A673 (cell line): ENCODE measurements at regions of chr13 and their contacts with region 1.

Region 1: DNA sequence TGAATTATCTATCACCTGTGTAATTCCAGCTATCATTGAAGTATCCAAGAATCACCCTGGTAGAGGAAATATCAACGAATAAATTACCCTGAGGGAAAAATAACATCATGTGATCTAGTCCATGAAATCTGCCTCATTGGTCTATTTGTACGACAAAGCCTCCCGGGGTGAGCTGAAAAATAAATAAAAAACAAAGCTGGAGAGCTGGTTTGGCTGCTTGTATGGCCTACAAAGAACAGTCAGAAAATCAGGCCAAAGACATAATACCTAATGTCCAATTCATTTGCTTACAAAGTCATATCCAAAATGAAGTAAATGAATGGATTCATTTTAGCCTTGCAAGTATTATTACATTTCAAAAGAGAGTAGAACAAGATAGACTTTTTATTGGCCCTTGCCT is 449.9 kb downstream of the KLF12 start:
- DNase-seq: peak; percentile 18
- H3K4me3 ChIP-seq: no peak overlapping the region
- H3K27ac ChIP-seq: peak overlapping the region; percentile 81
- H3K4me1 ChIP-seq: peaks cover 49% of the 10 kb centered on the region
- H3K27me3 ChIP-seq: no peaks in the 10 kb centered on the region
- CTCF ChIP-seq: no peak

Region 2: GRCh38 chr13:73335221-73335620 is 349.1 kb before region 1 on chr13:
- CTCF ChIA-PET with region 1: no interaction called
- POLR2A ChIA-PET with region 1: no interaction called
- intact Hi-C with region 1: loop called (anchors 10 kb)
- DNase-seq: peak; percentile 95
- H3K4me3 ChIP-seq: peak overlapping the region; percentile 4
- H3K27ac ChIP-seq: peak overlapping the region; percentile 69
- H3K4me1 ChIP-seq: peaks cover 27% of the 10 kb centered on the region
- H3K27me3 ChIP-seq: no peaks in the 10 kb centered on the region
- CTCF ChIP-seq: no peak

Region 3: GRCh38 chr13:73505376-73505890 is 178.9 kb before region 1 on chr13:
- CTCF ChIA-PET with region 1: no interaction called
- POLR2A ChIA-PET with region 1: no interaction called
- intact Hi-C with region 1: no loop called
- DNase-seq: no peak
- H3K4me3 ChIP-seq: no peak overlapping the region
- H3K27ac ChIP-seq: no peak overlapping the region
- H3K4me1 ChIP-seq: no peaks in the 10 kb centered on the region
- H3K27me3 ChIP-seq: no peaks in the 10 kb centered on the region
- CTCF ChIP-seq: no peak

Region 4: GRCh38 chr13:73653688-73654087 is 30.6 kb before region 1 on chr13:
- CTCF ChIA-PET with region 1: interaction called, 13 read pairs
- POLR2A ChIA-PET with region 1: no interaction called
- intact Hi-C with region 1: no loop called
- DNase-seq: no peak
- H3K4me3 ChIP-seq: no peak overlapping the region
- H3K27ac ChIP-seq: no peak overlapping the region
- H3K4me1 ChIP-seq: no peaks in the 10 kb centered on the region
- H3K27me3 ChIP-seq: no peaks in the 10 kb centered on the region
- CTCF ChIP-seq: no peak